CD8-positive, alpha-beta T cell (primary cell): ENCODE measurements at regions of chr4 and their contacts with region 1.

Region 1: DNA sequence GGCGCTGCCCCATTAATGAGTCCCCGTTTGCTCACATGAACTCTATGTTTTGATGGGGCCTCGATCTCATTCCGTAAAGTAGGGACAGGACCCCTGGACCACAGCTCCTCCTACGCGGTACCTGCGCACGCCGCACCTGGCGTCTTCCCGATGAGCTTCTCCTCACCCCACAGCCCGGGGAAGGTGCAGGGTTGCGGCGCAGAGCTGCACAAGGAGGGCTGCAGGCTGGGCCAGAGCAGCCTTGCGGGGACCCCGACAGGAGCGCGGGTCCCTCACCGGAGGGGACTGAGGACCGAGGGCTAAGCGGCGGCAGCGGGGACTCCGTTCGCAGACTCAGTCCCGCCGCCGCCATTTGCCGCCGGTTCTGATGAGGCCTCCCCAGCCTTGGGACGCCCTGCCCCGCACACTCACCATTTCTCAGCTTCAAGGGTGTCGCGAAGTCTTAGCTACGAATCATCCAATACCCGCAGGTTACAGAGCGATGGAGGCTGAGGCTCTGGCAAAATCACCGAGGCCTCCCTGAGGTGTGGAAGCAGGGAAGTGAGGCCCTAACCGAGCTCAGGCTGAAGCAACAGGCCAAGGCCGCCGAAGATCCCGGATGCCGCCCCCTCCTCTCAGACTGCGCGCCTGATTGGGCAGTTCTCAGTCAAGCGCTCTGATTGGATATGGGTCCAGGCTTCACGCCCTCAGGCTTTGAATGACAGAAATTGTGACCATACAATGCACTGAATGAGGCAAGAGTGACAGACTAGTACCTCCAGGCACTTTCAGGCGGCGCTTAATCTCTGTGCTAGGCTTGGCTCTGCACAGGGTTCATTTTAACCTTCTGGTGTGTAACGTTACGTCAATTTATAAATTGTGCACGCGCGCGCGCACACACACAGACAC is 25.1 kb downstream of the ZNF721 start:
- DNase-seq: peak; percentile 85 to 99 (median 92)
- ATAC-seq: peak; percentile 96
- H3K4me3 ChIP-seq: peak overlapping the region; percentile 77 to 79
- H3K4me3 Mint-ChIP-seq: peak overlapping the region; percentile 99
- H3K27ac ChIP-seq: peak overlapping the region; percentile 86 to 88
- H3K27ac Mint-ChIP-seq: peak overlapping the region; percentile 100
- H3K4me1 ChIP-seq: peaks cover 10% of the 10 kb centered on the region
- H3K4me1 Mint-ChIP-seq: peaks cover 34% of the 10 kb centered on the region
- H3K27me3 ChIP-seq: no peaks in the 10 kb centered on the region
- H3K27me3 Mint-ChIP-seq: no peaks in the 10 kb centered on the region
- CTCF ChIP-seq: no peak

Region 2: DNA sequence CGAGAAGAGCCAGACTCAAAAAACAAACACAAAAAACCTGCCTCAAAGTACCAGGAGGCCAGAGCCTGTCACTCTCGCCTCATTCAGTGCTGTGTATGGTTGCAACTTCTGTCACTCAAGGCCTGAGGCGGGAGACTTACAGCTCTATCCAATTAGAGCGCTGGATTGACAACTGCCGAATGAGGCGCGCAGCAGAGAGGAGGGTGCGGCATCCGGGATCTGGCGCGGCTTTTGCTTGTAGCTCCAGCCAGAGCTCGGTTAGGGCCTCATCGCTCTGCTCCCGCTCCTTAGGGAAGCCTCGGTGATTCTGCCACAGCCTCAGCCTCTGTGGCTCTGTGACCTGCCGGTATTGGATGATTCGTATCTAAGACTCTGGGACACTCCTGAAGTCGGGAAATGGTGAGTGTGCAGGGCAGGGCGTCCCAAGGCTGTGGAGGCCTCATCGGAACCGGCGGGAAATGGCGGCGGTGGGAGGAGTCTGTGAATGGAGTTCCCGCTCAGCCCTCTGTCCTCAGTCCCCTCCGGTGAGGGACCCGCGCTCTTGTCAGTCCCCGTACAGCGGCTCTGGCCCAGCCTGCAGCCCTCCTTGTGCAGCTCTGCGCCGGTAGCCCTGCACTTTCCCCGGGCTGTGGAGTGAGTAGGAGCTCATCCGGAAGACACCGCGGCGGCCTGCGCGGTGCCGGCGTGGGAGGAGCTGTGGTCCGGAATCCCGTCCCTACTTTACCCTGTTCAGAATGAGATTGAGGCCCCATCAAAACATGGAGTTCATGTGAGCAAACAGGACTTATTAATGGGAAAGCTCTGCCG is 349.3 kb before region 1 on chr4 and contains the start of gene ZNF718:
- CTCF ChIA-PET with region 1: no interaction called
- POLR2A ChIA-PET with region 1: interaction called, 10 read pairs
- intact Hi-C with region 1: no loop called
- DNase-seq: peak; percentile 78 to 97 (median 91)
- ATAC-seq: peak; percentile 95
- H3K4me3 ChIP-seq: peak within 1 kb of the TSS; percentile 78 to 96
- H3K4me3 Mint-ChIP-seq: peak within 1 kb of the TSS; percentile 99
- H3K27ac ChIP-seq: peak within 1 kb of the TSS; percentile 75 to 83
- H3K27ac Mint-ChIP-seq: peak within 1 kb of the TSS; percentile 99
- H3K4me1 ChIP-seq: peaks cover 29% of the 10 kb centered on the region
- H3K4me1 Mint-ChIP-seq: peaks cover 44% of the 10 kb centered on the region
- H3K27me3 ChIP-seq: no peaks in the 10 kb centered on the region
- H3K27me3 Mint-ChIP-seq: no peaks in the 10 kb centered on the region
- CTCF ChIP-seq: no peak
- total RNA-seq, gene ZNF718: 3.6 to 4.0 TPM

Region 3: DNA sequence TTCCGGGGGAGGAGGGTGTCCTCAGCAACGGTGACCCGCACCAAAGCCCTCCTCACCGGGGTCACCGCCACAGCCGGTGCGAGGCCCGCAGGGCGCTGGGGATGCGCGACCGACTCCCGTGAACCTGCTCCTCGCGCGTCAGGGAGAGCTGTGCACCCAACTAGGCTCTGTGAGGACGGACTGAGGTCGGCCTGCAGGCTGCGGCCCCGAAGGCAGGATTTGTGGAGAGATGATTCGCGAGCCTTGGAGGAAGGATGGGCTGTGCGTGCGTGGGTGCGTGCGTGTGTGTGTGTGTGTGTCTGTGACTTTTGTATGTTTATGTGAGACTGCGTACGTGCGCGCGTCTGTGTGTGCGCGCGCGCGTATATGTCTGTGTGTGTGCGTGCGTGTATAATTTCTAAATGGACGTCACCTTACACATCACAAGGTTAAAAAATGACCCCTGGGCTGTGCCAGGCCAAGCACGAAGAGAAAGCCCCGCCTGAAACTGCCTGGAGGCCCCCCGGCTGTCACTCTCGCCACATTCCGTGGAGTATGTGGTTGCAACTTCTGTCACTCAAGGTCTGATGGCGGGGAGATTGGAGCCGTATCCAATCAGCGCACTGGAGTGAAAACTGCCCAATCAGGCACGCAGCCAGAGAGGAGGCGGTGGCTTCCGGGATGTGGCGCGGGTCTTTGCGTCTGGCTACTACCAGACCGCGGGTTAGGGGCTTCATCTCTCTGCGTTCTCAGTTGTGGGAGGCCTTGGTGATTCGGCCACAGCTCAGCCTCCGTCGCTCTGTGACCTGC is 136.5 kb before region 1 on chr4 and contains the start of gene ZNF141:
- CTCF ChIA-PET with region 1: no interaction called
- POLR2A ChIA-PET with region 1: interaction called, 7 read pairs
- intact Hi-C with region 1: loop called (anchors 1 kb)
- DNase-seq: peak; percentile 84 to 97 (median 91)
- ATAC-seq: peak; percentile 88
- H3K4me3 ChIP-seq: peak within 1 kb of the TSS; percentile 94 to 95
- H3K4me3 Mint-ChIP-seq: peak within 1 kb of the TSS; percentile 99
- H3K27ac ChIP-seq: peak within 1 kb of the TSS; percentile 90 to 95
- H3K27ac Mint-ChIP-seq: peak within 1 kb of the TSS; percentile 99
- H3K4me1 ChIP-seq: peaks cover 17% of the 10 kb centered on the region
- H3K4me1 Mint-ChIP-seq: peaks cover 46% of the 10 kb centered on the region
- H3K27me3 ChIP-seq: no peaks in the 10 kb centered on the region
- H3K27me3 Mint-ChIP-seq: no peaks in the 10 kb centered on the region
- CTCF ChIP-seq: no peak
- total RNA-seq, gene ZNF141: 16.3 to 19.9 TPM

Region 4: DNA sequence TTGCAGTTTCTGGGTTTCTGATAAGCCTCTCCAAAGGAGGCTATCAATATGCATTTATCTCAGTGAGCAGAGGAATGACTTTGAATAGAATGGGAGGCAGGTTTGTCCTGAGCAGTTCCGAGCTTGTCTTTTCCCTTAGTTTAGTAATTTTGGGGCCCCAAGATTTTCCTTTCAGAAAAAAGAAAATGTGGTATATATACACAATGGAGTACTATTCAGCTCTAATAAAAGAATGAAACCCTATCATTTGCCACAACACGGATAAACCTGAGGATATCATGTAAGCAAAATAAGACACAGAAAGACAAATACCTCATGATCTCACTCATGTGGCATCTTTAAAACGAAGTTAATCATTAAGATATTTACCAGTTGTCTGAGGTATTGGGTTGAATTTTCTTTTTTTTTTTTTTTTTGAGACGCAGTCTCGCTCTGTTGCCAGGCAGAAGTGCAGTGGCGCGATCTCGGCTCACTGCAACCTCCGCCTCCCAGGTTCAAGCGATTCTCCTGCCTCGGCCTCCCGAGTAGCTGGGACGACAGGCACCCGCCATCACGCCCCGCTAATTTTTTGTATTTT is 24.6 kb after region 1 on chr4:
- CTCF ChIA-PET with region 1: interaction called, 3 read pairs
- POLR2A ChIA-PET with region 1: interaction called, 13 read pairs
- intact Hi-C with region 1: loop called (anchors 1 kb)
- DNase-seq: peak in 4 of 9 experiments; percentile 0 to 48 (median 40)
- ATAC-seq: peak; percentile 54
- H3K4me3 ChIP-seq: peak overlapping the region; percentile 85 to 90
- H3K4me3 Mint-ChIP-seq: peak overlapping the region; percentile 92
- H3K27ac ChIP-seq: peak overlapping the region; percentile 92 to 93
- H3K27ac Mint-ChIP-seq: peak overlapping the region; percentile 96
- H3K4me1 ChIP-seq: peaks cover 22% of the 10 kb centered on the region
- H3K4me1 Mint-ChIP-seq: peaks cover 42% of the 10 kb centered on the region
- H3K27me3 ChIP-seq: no peaks in the 10 kb centered on the region
- H3K27me3 Mint-ChIP-seq: no peaks in the 10 kb centered on the region
- CTCF ChIP-seq: no peak

Region 5: DNA sequence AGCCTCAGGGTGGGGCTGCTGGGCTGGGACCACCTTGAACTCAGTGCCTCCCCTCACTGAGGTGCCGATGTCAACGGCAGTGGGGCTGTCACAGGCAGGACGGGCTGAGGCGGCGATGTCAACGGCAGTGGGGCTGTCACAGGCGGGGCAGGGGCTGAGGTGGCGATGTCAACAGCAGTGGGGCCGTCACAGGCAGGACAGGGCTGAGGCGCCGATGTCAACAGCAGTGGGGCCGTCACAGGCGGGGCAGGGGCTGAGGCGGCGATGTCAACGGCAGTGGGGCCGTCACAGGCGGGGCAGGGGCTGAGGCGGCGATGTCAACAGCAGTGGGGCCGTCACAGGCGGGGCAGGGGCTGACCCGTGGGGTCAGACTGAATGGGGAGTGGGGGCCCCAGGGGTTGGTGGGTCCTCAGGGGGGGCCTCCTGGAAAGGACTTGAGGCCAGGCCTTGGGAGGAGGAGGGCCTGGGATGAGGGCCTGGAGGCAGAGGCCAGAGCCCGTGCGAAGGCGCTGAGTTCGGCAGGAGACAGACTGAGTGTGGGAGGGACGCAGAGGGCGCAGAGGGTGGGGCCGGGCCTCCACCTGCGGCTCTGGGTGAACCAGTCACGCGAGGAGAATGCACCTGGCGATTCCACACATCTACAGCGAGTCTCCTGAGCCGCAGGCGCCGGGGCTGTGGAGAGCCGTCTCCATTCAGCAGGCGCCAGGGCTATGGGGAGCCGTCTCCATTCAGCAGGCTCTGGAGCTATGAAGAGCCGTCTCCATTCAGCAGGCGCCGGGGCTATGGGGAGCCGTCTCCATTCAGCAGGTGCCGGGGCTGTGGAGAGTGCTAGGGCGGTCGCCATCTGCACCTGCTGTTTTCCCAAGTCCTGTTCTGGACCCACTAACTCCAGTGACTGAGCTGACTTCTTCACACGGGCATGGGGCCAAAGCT is 177.4 kb after region 1 on chr4:
- CTCF ChIA-PET with region 1: no interaction called
- POLR2A ChIA-PET with region 1: no interaction called
- intact Hi-C with region 1: no loop called
- DNase-seq: no peak
- ATAC-seq: no peak
- H3K4me3 ChIP-seq: no peak overlapping the region
- H3K4me3 Mint-ChIP-seq: no peak overlapping the region
- H3K27ac ChIP-seq: no peak overlapping the region
- H3K27ac Mint-ChIP-seq: no peak overlapping the region
- H3K4me1 ChIP-seq: no peaks in the 10 kb centered on the region
- H3K4me1 Mint-ChIP-seq: peaks cover 2% of the 10 kb centered on the region
- H3K27me3 ChIP-seq: no peaks in the 10 kb centered on the region
- H3K27me3 Mint-ChIP-seq: peaks cover 5% of the 10 kb centered on the region
- CTCF ChIP-seq: no peak